ENCODE measurements at regions of chr6 and their contacts with region 1.

Region 1: DNA sequence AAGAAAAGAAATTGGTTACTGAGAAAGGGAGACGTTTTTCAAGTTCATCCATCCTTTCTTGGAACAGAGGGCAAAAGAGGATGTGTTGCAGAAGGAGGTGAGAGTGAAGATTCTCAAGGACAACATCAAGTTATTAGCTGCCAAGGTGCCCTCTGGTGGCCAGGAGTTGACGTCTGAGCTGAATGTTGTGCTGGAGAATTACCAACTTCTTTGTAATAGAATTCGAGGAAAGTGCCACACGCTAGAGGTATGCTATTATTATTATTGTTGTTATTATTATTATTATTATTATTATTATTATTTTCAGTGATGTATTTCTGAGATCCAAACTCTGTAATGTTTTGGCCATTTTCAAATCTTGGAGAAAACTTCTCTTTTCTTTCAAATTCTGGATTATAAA is 197.0 kb downstream of the UTRN start:
- DNase-seq: peak; percentile 73
- CTCF ChIP-seq: peak; percentile 80

Region 2: GRCh38 chr6:144104898-144105487 is 377.1 kb before region 1 on chr6:
- in situ Hi-C with region 1: loop called (anchors 10 kb)
- DNase-seq: peak; percentile 64
- CTCF ChIP-seq: peak; percentile 68

Region 3: GRCh38 chr6:144265390-144265789 is 216.8 kb before region 1 on chr6:
- in situ Hi-C with region 1: no loop called
- DNase-seq: peak; percentile 52
- CTCF ChIP-seq: no peak